OCI-LY7 (cell line): ENCODE measurements at regions of chr11 and their contacts with region 1.

Region 1: GRCh38 chr11:64204464-64204989 is 2.0 kb upstream of the FERMT3 start:
- DNase-seq: peak; percentile 85
- H3K4me3 ChIP-seq: no peak overlapping the region
- H3K27ac ChIP-seq: peak overlapping the region; percentile 96
- H3K4me1 ChIP-seq: peaks cover 35% of the 10 kb centered on the region
- CTCF ChIP-seq: peak; percentile 90

Region 2: DNA sequence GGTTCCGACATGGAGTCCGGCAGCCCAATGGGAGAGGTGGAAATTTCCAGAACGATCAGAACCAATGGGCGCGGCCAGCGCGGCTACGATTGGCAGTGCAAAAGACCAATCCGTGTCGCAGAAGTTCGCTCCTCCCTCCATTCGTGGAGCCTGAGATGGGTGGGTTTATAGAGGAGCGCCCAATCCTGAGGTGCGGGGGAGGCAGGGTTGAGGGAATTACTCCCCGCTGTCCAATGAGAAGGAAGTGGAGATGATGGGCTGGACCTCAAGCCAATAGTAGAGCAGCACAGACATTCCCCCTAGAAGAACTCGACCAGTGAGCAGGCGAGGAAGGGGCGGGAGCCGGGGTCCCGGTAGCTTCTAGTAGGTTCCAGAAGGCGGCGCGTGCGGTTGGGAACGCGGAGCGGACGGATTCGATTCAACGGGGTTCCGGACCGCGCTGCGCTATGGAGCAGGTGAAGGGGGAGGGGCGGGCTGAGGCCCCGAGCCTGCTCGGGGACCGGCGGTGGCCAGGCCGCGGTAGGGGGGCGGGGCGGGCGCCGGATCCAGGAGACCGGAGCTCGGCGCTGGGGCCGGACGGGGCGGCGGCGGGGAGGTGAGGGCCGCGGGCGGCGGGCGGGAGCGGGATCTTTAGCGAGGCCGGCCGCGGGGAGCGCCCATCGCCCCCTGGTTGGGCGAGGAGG is 18.6 kb before region 1 on chr11 and contains the start of gene STIP1:
- CTCF ChIA-PET with region 1: interaction called, 5 read pairs
- POLR2A ChIA-PET with region 1: interaction called, 28 read pairs
- intact Hi-C with region 1: loop called (anchors 2 kb)
- DNase-seq: peak; percentile 100
- H3K4me3 ChIP-seq: peak within 1 kb of the TSS; percentile 75
- H3K27ac ChIP-seq: peak within 1 kb of the TSS; percentile 59
- H3K4me1 ChIP-seq: peaks cover 30% of the 10 kb centered on the region
- CTCF ChIP-seq: 0 out of 2 replicates have a peak, but pooled peaks have one; percentile 19
- total RNA-seq, gene STIP1: 271 and 309 TPM in 2 replicates

Region 3: GRCh38 chr11:64225612-64226506 is 21.3 kb after region 1 on chr11 and contains the starts of genes NUDT22 and TRPT1:
- CTCF ChIA-PET with region 1: interaction called, 4 read pairs
- POLR2A ChIA-PET with region 1: interaction called, 29 read pairs
- intact Hi-C with region 1: loop called (anchors 1 kb)
- DNase-seq: peak; percentile 95
- H3K4me3 ChIP-seq: peak within 1 kb of the TSS; percentile 83
- H3K27ac ChIP-seq: peak within 1 kb of the TSS; percentile 77
- H3K4me1 ChIP-seq: peaks cover 33% of the 10 kb centered on the region
- CTCF ChIP-seq: peak; percentile 66
- total RNA-seq, gene NUDT22: 54.6 and 81.4 TPM in 2 replicates
- total RNA-seq, gene TRPT1: 35.7 and 49.0 TPM in 2 replicates

Region 4: DNA sequence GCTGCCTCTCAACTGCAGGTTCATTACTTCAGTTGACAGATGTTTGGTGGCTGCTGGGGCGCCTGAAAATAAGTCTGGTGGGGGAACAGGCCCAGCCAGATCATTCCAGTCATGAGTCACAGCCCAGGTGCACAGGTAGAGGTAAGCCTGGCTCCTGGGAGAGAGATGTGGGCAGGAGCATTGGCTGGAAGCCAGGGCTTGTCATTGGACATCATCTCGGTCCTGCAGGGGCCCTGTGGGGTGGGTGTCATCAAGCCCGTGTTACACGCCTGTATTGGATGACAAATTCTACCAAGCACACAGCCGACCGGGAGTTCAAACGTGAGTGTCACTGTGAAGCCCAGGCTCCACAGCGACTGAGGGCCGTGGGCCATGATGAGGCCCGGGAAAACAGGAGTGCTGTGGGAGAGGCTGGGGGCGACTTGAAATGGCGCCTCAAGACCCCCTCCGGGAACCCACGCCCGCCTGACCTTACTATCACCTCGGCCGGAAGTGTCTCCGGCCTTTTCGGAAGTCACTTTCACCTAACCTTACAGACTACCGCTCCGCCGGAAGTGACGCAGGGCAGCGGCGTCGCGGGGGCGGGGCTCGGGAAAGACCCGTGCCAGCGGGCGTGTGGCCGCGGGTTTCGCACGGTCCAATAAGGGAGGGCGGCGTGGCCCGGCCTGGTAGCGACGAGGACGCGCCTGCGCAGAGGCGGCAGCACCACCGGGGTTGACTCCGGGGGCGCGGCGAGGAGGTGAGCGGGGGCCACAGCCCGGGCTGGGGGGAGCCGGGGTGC is 36.1 kb after region 1 on chr11 and contains the start of gene FKBP2:
- CTCF ChIA-PET with region 1: interaction called, 9 read pairs
- POLR2A ChIA-PET with region 1: interaction called, 27 read pairs
- intact Hi-C with region 1: loop called (anchors 2 kb)
- DNase-seq: peak; percentile 98
- H3K4me3 ChIP-seq: peak within 1 kb of the TSS; percentile 81
- H3K27ac ChIP-seq: peak within 1 kb of the TSS; percentile 91
- H3K4me1 ChIP-seq: peaks cover 50% of the 10 kb centered on the region
- CTCF ChIP-seq: no peak
- total RNA-seq, gene FKBP2: 57.3 and 70.6 TPM in 2 replicates

Region 5: DNA sequence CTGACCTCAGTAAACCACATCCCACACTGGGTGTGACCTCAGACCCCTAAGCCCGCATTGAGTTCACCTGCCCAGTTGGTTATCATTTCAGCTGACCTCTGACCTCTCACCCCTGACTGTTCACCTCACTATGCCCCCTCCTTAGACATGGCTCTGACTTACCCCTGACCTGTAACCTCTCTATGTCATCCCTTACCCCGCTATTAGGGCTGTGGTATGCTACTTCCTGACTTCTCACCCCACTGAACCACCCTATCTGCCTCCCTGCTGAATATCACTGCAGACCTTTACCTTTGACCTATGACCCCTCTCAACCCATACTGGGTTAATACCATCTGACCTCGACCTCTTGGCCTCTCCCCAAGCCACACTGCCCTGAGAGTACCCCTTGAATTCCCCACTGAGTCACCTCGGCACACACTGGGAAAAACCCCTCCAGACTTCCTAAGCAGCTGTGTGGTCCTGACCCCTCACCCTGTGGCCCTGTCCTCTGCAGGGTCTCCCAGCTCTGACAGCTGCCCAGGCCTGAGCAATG is 55.1 kb after region 1 on chr11:
- CTCF ChIA-PET with region 1: no interaction called
- POLR2A ChIA-PET with region 1: no interaction called
- intact Hi-C with region 1: no loop called
- DNase-seq: no peak
- H3K4me3 ChIP-seq: no peak overlapping the region
- H3K27ac ChIP-seq: no peak overlapping the region
- H3K4me1 ChIP-seq: no peaks in the 10 kb centered on the region
- CTCF ChIP-seq: no peak

Region 6: DNA sequence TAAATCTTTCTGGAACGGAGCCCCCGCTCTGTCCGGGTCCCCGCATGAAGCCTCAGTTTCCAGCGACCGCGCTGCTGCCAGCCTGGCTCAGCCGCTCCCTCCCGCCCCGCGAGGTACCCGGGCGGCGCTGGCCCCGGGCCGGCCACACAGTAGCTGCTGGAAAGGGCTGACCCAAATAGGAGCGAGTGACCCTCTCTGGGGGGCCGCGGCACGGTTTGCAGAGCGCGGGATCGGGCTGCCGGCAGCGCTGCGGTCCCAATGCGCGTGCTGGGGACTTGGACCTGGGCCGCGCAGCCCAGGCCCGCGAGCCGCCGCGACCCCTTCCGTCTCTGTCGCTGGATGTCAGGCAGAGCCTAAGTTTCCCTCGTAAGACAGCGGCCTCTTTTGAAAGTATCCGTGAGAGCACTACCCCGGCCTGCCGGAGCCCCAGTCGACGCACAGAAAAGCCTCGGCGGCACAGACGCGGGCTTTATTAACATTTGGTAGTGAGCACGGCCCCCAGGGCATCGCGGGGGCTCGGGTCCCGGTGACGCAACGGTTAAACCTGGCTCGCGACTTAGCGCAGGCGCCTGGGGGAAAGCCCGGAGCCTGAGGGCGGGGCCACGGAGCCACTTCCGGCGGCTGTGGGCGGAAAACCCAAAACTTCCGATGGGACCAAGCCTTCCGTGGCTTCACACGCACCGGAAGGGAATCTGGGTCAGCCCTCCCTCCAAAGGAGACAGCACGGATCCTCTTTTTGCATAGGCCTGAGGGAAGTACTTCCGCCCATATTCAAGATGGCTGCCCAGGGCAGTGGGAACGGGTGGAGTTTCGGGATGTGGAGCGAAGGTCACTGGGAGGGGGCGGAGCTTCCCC is 65.1 kb after region 1 on chr11:
- CTCF ChIA-PET with region 1: no interaction called
- POLR2A ChIA-PET with region 1: interaction called, 6 read pairs
- intact Hi-C with region 1: loop called (anchors 1 kb)
- DNase-seq: peak; percentile 100
- H3K4me3 ChIP-seq: peak overlapping the region; percentile 86
- H3K27ac ChIP-seq: peak overlapping the region; percentile 91
- H3K4me1 ChIP-seq: peaks cover 27% of the 10 kb centered on the region
- CTCF ChIP-seq: peak; percentile 60

Region 7: GRCh38 chr11:64284962-64285884 is 80.7 kb after region 1 on chr11 and contains the start of gene GPR137:
- CTCF ChIA-PET with region 1: no interaction called
- POLR2A ChIA-PET with region 1: interaction called, 8 read pairs
- intact Hi-C with region 1: loop called (anchors 5 kb)
- DNase-seq: peak; percentile 93
- H3K4me3 ChIP-seq: peak within 1 kb of the TSS; percentile 73
- H3K27ac ChIP-seq: peak within 1 kb of the TSS; percentile 80
- H3K4me1 ChIP-seq: peaks cover 14% of the 10 kb centered on the region
- CTCF ChIP-seq: no peak
- total RNA-seq, gene GPR137: 18.3 and 19.5 TPM in 2 replicates